Activated CD4-positive, alpha-beta T cell treated with anti-CD3 and anti-CD28 coated beads for 36 hours (primary cell): ENCODE measurements at regions of chr9 and their contacts with region 1.

Region 1: DNA sequence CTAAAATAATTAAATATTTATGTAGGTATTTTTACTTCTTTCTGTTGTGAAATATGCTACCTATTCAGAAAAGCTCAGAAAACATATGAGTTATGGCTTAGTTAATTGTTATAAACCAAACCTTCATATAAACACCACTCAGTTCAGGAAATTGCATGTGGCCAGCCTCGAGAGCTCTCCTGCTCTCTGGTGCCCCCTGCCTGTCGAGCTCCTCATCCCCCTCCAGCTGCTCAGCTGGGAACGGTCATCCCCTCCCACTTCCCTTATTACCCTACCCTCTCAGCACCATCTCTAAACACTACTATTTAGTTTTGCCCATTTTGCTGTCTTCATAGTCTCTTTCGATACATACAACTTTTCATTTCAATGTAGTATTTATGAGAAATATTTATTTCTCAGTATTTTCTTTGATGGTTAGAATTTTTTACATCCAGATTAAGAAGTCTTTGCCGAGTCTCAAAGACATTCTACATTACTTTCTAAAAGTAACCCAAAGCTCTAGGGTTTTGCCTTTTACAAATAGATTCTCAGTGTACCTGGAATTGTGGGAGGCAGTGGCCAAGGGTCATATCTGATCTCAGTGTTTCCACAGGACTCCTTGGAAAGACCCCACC is 51.2 kb upstream of the SEMA4D start:
- DNase-seq: peak; percentile 94
- ATAC-seq: peak; percentile 100
- H3K4me3 Mint-ChIP-seq: no peak overlapping the region
- H3K27ac Mint-ChIP-seq: no peak overlapping the region
- H3K4me1 Mint-ChIP-seq: peaks cover 22% of the 10 kb centered on the region
- H3K27me3 Mint-ChIP-seq: no peaks in the 10 kb centered on the region

Region 2: GRCh38 chr9:89418882-89419640 is 130.1 kb before region 1 on chr9:
- CTCF ChIA-PET with region 1: interaction called, 27 read pairs
- POLR2A ChIA-PET with region 1: no interaction called
- intact Hi-C with region 1: no loop called
- DNase-seq: peak; percentile 85
- ATAC-seq: peak; percentile 22
- H3K4me3 Mint-ChIP-seq: peak overlapping the region; percentile 74
- H3K27ac Mint-ChIP-seq: peak overlapping the region; percentile 88
- H3K4me1 Mint-ChIP-seq: peaks cover 93% of the 10 kb centered on the region
- H3K27me3 Mint-ChIP-seq: no peaks in the 10 kb centered on the region

Region 3: DNA sequence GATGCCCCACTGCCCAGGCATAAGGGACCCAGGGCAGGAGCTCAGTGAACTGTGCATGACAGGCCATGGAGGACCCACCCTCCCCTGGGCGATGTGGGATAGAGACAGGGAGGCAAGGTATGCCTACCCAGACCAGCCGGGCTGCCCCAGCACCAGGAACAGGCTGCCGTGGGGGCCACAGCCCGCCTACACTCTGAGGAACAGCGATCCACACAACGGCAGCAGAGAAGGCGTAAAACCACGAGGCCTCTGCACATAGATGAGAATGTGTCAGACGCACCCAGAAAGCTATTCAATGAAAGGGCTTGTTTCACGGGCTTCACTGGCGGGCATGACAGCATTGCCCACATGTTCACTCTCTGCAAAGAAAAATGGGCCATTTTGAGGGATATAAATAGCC is 100.8 kb before region 1 on chr9:
- CTCF ChIA-PET with region 1: interaction called, 13 read pairs
- POLR2A ChIA-PET with region 1: interaction called, 3 read pairs
- intact Hi-C with region 1: no loop called
- DNase-seq: peak; percentile 75
- ATAC-seq: peak; percentile 76
- H3K4me3 Mint-ChIP-seq: peak overlapping the region; percentile 33
- H3K27ac Mint-ChIP-seq: peak overlapping the region; percentile 93
- H3K4me1 Mint-ChIP-seq: peaks cover 97% of the 10 kb centered on the region
- H3K27me3 Mint-ChIP-seq: no peaks in the 10 kb centered on the region

Region 4: GRCh38 chr9:89483592-89484522 is 65.3 kb before region 1 on chr9:
- CTCF ChIA-PET with region 1: interaction called, 29 read pairs
- POLR2A ChIA-PET with region 1: interaction called, 16 read pairs
- intact Hi-C with region 1: loop called (anchors 2 kb)
- DNase-seq: peak; percentile 79
- ATAC-seq: peak; percentile 57
- H3K4me3 Mint-ChIP-seq: peak overlapping the region; percentile 79
- H3K27ac Mint-ChIP-seq: peak overlapping the region; percentile 93
- H3K4me1 Mint-ChIP-seq: peaks cover 91% of the 10 kb centered on the region
- H3K27me3 Mint-ChIP-seq: no peaks in the 10 kb centered on the region

Region 5: DNA sequence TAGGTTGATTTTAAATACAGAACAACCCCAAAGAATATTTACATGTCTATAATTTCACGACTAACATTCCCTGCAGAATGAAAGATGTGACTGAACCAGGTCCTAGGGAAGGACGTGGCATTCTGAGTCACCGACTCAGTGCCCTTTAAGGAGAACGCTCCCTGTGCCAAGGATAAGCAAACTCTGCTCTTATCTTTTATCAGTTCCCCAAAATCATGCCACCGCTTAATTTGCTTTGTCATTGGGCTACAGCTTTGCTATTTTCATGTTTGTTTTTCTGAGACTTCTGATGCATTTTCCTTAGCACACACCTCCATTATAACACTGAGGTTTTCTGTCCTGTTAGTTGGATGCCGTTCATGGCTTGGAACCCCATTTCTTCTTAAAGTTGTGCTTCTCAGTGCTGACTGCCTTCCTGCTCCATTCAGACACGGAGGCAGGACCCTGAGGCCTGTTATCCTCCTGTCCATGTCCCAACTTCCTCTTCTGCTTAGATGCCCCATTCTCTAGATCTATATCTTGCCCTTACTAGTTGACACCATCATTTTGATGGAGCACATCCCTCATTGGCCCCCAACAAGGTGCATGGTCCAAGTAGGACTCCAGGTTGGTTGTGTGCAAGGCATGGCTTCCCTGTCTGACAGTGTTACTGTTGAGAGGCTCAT is 40.1 kb before region 1 on chr9:
- CTCF ChIA-PET with region 1: interaction called, 25 read pairs
- POLR2A ChIA-PET with region 1: interaction called, 3 read pairs
- intact Hi-C with region 1: no loop called
- DNase-seq: no peak
- ATAC-seq: no peak
- H3K4me3 Mint-ChIP-seq: no peak overlapping the region
- H3K27ac Mint-ChIP-seq: peak overlapping the region; percentile 0
- H3K4me1 Mint-ChIP-seq: peaks cover 62% of the 10 kb centered on the region
- H3K27me3 Mint-ChIP-seq: no peaks in the 10 kb centered on the region

Region 6: GRCh38 chr9:89536145-89536574 is 13.0 kb before region 1 on chr9:
- CTCF ChIA-PET with region 1: interaction called, 39 read pairs
- POLR2A ChIA-PET with region 1: interaction called, 6 read pairs
- intact Hi-C with region 1: no loop called
- DNase-seq: no peak
- ATAC-seq: peak; percentile 68
- H3K4me3 Mint-ChIP-seq: peak overlapping the region; percentile 57
- H3K27ac Mint-ChIP-seq: peak overlapping the region; percentile 97
- H3K4me1 Mint-ChIP-seq: peaks cover 88% of the 10 kb centered on the region
- H3K27me3 Mint-ChIP-seq: no peaks in the 10 kb centered on the region

Region 7: GRCh38 chr9:89586311-89586710 is 37.2 kb after region 1 on chr9:
- CTCF ChIA-PET with region 1: no interaction called
- POLR2A ChIA-PET with region 1: no interaction called
- intact Hi-C with region 1: no loop called
- DNase-seq: no peak
- ATAC-seq: no peak
- H3K4me3 Mint-ChIP-seq: no peak overlapping the region
- H3K27ac Mint-ChIP-seq: no peak overlapping the region
- H3K4me1 Mint-ChIP-seq: no peaks in the 10 kb centered on the region
- H3K27me3 Mint-ChIP-seq: peaks cover 21% of the 10 kb centered on the region

Region 8: DNA sequence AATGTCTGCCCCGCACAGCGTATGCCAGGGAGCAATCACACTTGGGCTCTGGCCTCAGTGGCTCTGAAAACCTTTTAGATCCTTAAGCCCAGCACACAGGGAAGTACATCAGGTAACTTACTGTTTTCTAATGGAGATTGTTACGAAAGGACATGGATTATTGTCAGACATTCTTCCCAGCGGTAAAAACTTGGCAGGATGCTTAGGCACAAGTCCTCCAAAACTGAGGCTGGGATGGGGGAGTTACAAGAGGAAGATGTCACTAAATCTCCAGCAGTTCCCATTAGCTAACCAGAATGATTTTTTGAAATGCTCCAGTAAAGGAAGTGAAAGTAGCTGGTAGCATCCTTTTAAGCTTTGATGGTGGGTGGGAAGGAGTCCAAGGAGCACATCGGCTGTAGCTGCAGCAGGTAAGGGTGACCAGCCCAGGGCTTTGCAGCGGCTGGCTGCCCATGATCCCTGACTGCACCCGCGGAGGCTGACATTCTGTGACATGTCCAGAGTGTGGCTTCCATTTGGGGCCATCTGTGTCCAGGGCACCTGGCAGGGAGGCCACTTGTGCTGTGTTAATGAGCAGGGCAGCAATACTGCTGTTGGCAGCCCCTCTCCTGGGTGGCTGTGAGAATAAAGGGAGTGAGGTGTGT is 221.5 kb after region 1 on chr9:
- CTCF ChIA-PET with region 1: no interaction called
- POLR2A ChIA-PET with region 1: no interaction called
- intact Hi-C with region 1: no loop called
- DNase-seq: no peak
- ATAC-seq: no peak
- H3K4me3 Mint-ChIP-seq: no peak overlapping the region
- H3K27ac Mint-ChIP-seq: no peak overlapping the region
- H3K4me1 Mint-ChIP-seq: no peaks in the 10 kb centered on the region
- H3K27me3 Mint-ChIP-seq: no peaks in the 10 kb centered on the region